Adrenal gland (tissue), 19 donors: ENCODE measurements at regions of chr1 and their contacts with region 1.

Region 1: DNA sequence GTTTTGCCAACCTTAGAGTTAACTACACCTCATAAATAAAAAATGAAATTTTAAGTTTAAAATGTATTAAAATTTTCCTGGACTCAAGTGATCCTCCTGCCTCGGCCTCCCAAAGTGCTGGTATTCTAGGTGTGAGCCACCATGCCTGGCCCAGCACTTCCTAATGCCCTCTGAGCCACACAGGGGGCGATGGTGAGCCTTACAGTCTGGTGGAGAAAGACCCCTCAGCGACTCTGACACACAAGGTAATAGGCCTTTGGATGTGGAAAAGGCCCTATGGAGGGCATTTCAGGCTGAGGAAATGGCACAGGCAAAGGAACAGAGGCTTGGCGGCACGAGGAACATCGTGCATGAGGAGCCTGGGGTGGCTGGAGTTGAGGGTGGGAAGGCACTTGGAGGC is 6.7 kb downstream of the CITED4 start:
- DNase-seq: no peak
- H3K4me3 ChIP-seq: no peak overlapping the region
- H3K27ac ChIP-seq: no peak overlapping the region
- H3K4me1 ChIP-seq: peaks cover 0 to 1% of the 10 kb centered on the region in 2 donors
- H3K27me3 ChIP-seq: no peaks in the 10 kb centered on the region
- CTCF ChIP-seq: peak in 3 of 6 experiments; percentile 7 to 17 (median 12)
- POLR2A ChIP-seq: no peak

Region 2: GRCh38 chr1:40939320-40940059 is 84.0 kb after region 1 on chr1:
- intact Hi-C with region 1: loop called in 1 of 2 experiments (anchors 5 kb)
- DNase-seq: peak in 4 of 7 donors; percentile 25 to 47 (median 35)
- H3K4me3 ChIP-seq: no peak overlapping the region
- H3K27ac ChIP-seq: peak overlapping the region in 1 of 5 donors; percentile 68
- H3K4me1 ChIP-seq: peaks cover 7 to 11% of the 10 kb centered on the region in 2 donors
- H3K27me3 ChIP-seq: no peaks in the 10 kb centered on the region
- CTCF ChIP-seq: no peak
- POLR2A ChIP-seq: no peak